Right ventricle myocardium inferior (tissue), 1 donor: ENCODE measurements at regions of chr1 and their contacts with region 1.

Region 1: DNA sequence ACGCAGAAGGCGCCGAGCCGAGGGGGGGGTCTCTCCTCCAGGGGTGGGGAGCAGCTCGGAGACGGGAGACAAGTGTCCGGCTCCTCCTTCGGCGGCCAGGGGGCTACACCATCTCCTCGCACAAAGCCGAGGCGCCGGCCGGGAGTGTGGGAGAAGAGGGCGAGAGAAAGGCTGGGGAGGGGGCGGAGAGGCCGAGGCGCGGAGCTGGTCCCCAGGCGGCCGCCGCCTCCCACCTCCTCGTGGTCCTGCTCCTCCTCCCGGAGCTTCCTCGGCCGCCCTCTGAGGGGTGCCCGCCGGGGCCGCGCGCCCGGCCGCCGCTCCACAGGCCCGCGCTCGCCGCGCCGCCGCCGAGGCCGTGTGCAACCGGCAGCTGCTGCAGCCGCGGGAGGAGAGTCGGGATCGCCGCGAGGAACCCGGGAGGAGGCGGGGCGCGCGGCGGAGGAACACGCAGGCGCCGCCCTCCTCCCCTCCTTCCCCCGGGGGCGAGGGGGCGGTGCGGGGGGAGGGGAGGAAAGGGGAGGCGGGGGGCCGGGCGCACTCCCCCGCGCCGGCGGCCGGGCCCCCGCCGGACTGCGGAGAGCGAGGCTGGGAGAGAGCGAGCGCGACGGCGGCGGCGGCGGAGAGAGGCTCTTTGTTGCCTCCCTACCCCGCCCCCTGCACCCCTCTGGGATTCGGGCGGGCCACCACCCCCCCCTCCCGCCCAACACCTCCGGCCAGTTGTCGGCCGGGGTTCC is at the start of gene ENAH:
- DNase-seq: peak; percentile 87
- ATAC-seq: peak; percentile 89
- total RNA-seq, gene ENAH: 80.0 TPM

Region 2: DNA sequence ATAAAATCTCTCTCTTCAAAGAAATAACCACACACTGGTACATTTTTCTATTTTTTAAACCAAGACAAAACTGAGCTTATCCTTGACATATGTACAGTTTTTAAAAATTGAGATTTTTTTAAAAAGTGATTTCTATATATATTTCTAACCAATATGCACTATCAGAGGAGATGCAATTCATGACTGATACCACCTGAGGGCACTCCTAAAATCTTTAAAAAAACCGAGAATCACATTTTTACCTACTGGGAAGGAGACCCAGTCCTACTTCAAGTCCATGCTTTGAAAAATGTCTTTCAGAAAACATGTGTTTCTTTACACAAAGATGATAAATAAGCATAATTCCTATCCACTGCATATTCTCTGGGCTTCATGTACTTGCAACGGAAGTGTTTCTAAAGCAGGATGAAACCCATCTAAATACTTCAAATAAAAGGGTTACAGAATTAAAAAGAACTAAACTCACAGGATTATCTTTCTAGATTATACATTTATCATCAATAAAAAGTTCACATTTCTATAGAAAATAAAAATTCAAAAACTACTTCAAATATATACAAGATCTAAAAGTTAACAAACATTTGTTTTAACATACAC is 98.6 kb before region 1 on chr1:
- intact Hi-C with region 1: loop called (anchors 5 kb)
- DNase-seq: no peak
- ATAC-seq: no peak

Region 3: DNA sequence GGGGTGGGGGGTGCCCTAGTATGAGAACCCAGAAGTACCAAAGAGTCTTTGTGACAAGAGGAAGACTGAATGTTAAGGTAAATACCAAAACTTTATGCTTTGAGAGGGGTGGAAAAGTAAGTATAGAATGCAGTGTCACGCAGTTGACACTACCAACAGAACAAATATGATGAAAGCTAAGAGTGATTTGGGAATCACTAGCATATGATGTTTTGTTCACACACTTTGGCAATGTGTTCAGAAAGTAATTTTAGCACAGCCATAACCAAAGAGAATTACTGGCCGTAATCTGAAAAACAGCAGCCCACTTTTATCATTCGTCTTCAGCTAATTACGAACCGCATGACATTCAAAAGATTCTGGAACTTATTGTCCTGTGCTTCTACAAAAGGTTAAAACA is 59.5 kb before region 1 on chr1:
- intact Hi-C with region 1: loop called (anchors 5 kb)
- DNase-seq: no peak
- ATAC-seq: peak; percentile 7

Region 4: DNA sequence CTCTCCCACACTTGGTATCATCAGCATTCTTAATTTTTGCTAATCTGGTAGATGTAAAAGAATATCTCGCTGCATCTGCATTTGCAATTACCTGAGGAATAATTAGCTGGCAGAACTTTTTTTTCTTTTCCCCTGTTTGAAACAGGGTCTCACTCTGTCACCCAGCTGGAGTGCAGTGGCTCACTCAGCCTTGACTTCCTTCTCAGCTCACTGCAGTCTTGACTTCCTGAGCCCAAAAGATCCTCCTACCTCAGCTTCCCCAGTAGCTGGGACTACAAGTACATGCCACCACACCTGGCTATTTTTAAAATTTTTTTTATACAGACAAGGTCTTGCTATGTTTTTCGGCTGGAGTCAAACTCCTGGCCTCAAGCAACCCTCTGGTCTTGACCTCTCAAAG is 35.4 kb after region 1 on chr1:
- intact Hi-C with region 1: no loop called
- DNase-seq: no peak
- ATAC-seq: no peak

Region 5: DNA sequence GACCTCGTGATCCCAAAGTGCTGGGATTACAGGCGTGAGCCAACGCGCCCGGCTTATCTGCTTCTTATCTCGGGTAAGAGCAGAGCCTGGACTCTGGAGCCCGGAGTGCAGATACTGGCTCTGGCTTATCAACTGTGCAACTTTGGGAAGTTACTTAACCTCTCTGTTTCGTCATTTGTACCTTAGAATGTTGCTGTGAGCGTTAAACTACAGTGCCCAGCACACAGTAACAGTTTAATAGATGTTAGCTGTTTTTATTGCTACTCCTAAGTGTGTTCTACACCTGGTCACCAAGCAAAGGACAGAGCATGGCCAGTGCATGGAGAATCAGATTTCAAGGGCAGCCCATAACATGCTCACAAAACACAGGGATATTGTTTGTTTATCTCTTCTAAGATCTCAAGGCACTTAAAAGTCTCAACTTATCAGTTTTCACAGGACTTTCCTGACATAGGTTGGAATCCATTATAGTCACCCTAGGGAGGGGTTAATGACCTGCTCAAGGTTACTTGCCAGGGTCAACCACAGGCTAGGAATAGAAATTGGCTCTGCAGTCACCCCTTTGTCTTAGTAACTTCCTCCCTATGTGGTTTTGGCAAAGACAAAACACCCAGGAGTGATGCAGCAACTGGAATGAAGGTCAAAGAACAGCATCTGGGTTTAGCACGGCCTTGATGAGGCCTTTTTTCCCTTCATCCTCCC is 102.2 kb after region 1 on chr1:
- intact Hi-C with region 1: loop called (anchors 5 kb)
- DNase-seq: no peak
- ATAC-seq: peak; percentile 60

Region 6: DNA sequence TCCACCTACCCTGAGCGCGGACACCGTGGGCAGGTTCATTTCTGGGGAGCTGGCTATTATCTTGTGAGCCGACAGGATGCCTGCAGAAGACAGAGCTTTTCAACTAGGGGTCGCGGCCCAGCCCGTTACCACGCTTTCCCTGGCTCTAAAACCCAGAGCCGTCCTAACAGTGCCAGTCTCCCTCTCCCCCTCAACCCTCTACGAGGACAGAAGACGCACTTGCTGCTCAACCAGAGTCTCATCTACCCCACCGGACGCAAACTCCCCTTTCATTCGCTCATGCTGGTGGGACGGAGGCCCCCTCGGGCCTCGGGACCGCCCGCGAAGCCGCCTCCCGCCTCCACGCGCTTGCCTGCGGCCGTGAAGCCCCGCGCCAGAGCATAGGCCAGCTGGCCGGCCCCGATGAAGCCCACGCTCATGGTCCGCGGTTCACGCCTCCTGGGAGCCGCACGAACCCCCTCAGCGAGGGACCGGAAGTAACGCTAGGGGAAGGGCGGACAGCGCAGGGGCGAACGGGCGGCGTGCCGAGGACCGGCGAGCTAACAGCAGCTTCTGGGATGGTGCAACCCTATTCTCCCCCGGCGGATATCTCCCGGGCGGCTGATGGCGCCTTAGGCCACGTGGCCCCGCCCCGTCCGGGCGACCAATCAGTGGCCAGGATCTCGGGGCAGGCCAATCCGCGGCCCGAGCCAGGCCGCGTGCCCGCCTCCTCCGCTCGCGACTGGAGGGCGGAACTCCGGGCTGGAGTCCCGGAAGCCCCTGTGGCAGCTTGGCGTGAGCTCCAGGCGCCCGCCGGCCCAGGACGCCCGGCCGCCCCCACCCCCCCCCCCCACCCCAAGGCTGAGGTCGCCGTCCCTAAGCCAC is 271.0 kb after region 1 on chr1 and contains the start of gene PYCR2:
- intact Hi-C with region 1: loop called (anchors 10 kb)
- DNase-seq: peak; percentile 98
- ATAC-seq: peak; percentile 99
- total RNA-seq, gene PYCR2: 58.6 TPM